CD4-positive, alpha-beta T cell (primary cell): ENCODE measurements at regions of chr16 and their contacts with region 1.

Region 1: GRCh38 chr16:75622761-75623605 is at the start of gene ADAT1:
- DNase-seq: peak; percentile 94 to 100 (median 97)
- ATAC-seq: peak; percentile 92
- H3K4me3 ChIP-seq: peak within 1 kb of the TSS; percentile 94
- H3K4me3 Mint-ChIP-seq: peak within 1 kb of the TSS; percentile 99
- H3K27ac ChIP-seq: peak within 1 kb of the TSS; percentile 87 to 98
- H3K27ac Mint-ChIP-seq: peak within 1 kb of the TSS; percentile 99
- H3K4me1 ChIP-seq: peaks cover 61% of the 10 kb centered on the region
- H3K4me1 Mint-ChIP-seq: peaks cover 77% of the 10 kb centered on the region
- H3K27me3 ChIP-seq: no peaks in the 10 kb centered on the region
- H3K27me3 Mint-ChIP-seq: no peaks in the 10 kb centered on the region
- CTCF ChIP-seq: no peak
- total RNA-seq, gene ADAT1: 46.7 to 47.6 TPM

Region 2: GRCh38 chr16:74984535-74985296 is 638.3 kb before region 1 on chr16 and contains the start of gene WDR59:
- CTCF ChIA-PET with region 1: no interaction called
- POLR2A ChIA-PET with region 1: no interaction called
- intact Hi-C with region 1: loop called (anchors 10 kb)
- DNase-seq: peak; percentile 94 to 100 (median 98)
- ATAC-seq: peak; percentile 98
- H3K4me3 ChIP-seq: peak within 1 kb of the TSS; percentile 100
- H3K4me3 Mint-ChIP-seq: peak within 1 kb of the TSS; percentile 96
- H3K27ac ChIP-seq: peak within 1 kb of the TSS; percentile 44 to 61
- H3K27ac Mint-ChIP-seq: peak within 1 kb of the TSS; percentile 84
- H3K4me1 ChIP-seq: peaks cover 23% of the 10 kb centered on the region
- H3K4me1 Mint-ChIP-seq: peaks cover 23% of the 10 kb centered on the region
- H3K27me3 ChIP-seq: no peaks in the 10 kb centered on the region
- H3K27me3 Mint-ChIP-seq: no peaks in the 10 kb centered on the region
- CTCF ChIP-seq: no peak
- total RNA-seq, gene WDR59: 60.2 to 67.2 TPM

Region 3: DNA sequence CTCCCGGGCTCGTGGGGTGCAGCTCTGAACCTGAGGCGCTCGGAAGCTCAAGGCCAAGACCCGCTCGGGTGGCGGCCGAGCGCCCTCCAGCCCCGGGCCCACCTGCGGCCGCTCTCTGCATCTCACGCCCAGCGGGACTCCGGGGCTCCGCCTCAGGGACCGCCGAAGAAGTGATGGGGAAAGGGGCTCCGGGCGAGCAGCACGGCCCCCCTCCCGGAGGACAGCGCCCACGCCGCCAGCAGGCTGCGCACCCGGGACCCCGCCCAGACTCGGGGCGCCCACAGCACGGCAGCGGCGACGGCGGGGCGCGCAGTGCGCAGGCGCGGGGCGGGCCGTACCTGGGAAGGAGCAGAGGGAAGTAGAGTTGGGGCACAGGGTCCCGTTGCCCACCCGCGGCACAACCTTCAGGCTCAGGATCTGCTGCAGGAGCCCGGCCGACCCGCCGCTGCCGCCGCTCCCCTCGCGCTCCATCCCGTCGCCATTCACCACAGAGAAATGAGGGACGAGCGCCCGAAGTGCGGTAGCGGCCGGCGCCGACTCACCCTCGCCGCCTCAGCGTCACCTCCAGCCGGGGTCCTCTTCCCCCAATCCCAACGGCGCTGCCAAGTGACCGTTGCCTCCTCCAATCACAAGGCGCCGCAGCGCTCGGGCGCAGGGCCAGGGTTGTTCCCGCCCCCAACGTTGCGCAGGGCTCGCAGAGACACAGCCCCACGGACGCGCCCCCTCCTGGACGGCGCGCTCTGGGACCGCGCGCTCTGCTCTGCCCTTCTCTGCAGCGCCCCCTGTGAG is 158.7 kb before region 1 on chr16 and contains the start of gene TMEM170A:
- CTCF ChIA-PET with region 1: interaction called, 4 read pairs
- POLR2A ChIA-PET with region 1: interaction called, 4 read pairs
- intact Hi-C with region 1: loop called (anchors 1 to 2 kb)
- DNase-seq: peak; percentile 97 to 100 (median 99)
- ATAC-seq: peak; percentile 86
- H3K4me3 ChIP-seq: peak within 1 kb of the TSS; percentile 87
- H3K4me3 Mint-ChIP-seq: peak within 1 kb of the TSS; percentile 96
- H3K27ac ChIP-seq: peak within 1 kb of the TSS; percentile 88 to 99
- H3K27ac Mint-ChIP-seq: peak within 1 kb of the TSS; percentile 95
- H3K4me1 ChIP-seq: peaks cover 40% of the 10 kb centered on the region
- H3K4me1 Mint-ChIP-seq: peaks cover 47% of the 10 kb centered on the region
- H3K27me3 ChIP-seq: no peaks in the 10 kb centered on the region
- H3K27me3 Mint-ChIP-seq: no peaks in the 10 kb centered on the region
- CTCF ChIP-seq: peak; percentile 100
- total RNA-seq, gene TMEM170A: 34.3 to 37.8 TPM

Region 4: DNA sequence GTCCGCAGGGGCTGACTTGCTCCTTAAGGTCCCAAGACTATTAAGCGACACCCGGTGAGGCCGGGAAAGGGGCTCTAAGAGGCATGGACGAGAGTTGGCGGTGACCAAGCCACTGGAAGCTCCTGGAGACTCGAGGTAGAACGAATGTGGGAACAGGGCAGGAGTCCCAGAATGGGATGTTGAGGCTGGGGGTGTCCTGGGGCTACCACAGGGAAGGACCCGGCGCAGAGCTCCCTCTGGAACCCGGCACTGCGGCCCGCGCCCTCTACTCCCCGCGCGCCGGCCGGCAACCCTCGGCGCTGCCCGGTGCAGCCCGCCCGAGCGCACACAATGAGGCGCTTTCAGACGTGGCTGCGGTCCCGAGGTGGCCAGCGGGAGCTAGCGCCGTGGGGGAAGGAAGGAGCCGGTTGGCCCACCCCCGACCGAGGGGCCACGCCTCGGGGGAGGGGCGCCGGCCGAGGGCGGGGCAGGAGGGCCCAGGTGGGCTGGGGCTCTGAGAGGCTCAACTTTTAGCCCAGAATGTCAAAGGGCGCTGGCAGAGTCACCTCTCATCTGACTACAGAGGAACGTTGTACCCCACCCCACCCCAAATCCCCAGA is 127.8 kb before region 1 on chr16 and contains the start of gene CHST6:
- CTCF ChIA-PET with region 1: no interaction called
- POLR2A ChIA-PET with region 1: no interaction called
- intact Hi-C with region 1: no loop called
- DNase-seq: peak in 4 of 14 experiments; percentile 6 to 36 (median 20)
- ATAC-seq: peak; percentile 39
- H3K4me3 ChIP-seq: peak within 1 kb of the TSS; percentile 12
- H3K4me3 Mint-ChIP-seq: peak within 1 kb of the TSS; percentile 68
- H3K27ac ChIP-seq: no peak within 1 kb of the TSS
- H3K27ac Mint-ChIP-seq: no peak within 1 kb of the TSS
- H3K4me1 ChIP-seq: peaks cover 8% of the 10 kb centered on the region
- H3K4me1 Mint-ChIP-seq: peaks cover 9% of the 10 kb centered on the region
- H3K27me3 ChIP-seq: peaks cover 22 to 29% of the 10 kb centered on the region in 2 experiments
- H3K27me3 Mint-ChIP-seq: peaks cover 45% of the 10 kb centered on the region
- CTCF ChIP-seq: no peak
- total RNA-seq, gene CHST6: not detected

Region 5: DNA sequence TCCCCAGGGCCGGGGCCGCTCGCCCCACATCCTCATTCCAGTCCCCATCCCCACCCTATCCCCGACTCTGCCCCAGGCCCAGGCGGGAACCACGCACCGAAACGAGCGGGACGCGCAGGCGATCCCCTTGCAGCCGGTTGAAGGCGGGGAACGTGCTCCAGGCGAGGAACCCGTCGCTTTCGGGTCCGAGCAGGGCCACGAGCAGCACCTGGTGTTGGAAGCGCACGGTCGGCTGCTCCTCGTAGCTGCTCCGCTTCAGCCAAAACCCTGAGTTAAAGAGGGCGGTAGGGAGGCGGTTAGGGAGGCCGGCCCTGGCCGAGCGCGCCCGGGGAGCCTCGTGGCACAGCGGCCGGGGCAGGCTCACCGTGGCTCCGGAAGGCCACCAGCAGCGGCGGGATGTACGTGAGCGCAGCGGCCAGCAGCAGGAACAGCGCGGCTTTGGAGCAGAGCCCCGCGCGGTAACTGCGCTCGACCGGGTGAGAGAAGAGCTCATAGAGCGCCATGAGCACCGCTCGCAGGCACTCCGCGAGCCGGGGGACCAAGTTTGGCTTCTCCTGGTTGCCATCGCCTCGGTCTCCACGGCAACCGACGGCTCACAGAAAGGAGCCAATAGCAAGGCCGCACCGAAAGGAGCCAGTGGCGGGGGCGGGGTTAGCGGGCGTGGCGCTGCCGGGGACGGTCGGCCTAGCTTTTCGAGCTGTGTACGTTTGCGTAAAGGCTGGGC is 67.1 kb before region 1 on chr16 and contains the start of gene TMEM231:
- CTCF ChIA-PET with region 1: interaction called, 3 read pairs
- POLR2A ChIA-PET with region 1: interaction called, 24 read pairs
- intact Hi-C with region 1: loop called in 1 of 2 experiments (anchors 2 kb)
- DNase-seq: peak; percentile 95 to 99 (median 97)
- ATAC-seq: peak; percentile 97
- H3K4me3 ChIP-seq: peak within 1 kb of the TSS; percentile 74
- H3K4me3 Mint-ChIP-seq: peak within 1 kb of the TSS; percentile 88
- H3K27ac ChIP-seq: peak within 1 kb of the TSS; percentile 58 to 82
- H3K27ac Mint-ChIP-seq: peak within 1 kb of the TSS; percentile 65
- H3K4me1 ChIP-seq: peaks cover 18% of the 10 kb centered on the region
- H3K4me1 Mint-ChIP-seq: peaks cover 13% of the 10 kb centered on the region
- H3K27me3 ChIP-seq: peaks cover 0 to 3% of the 10 kb centered on the region in 2 experiments
- H3K27me3 Mint-ChIP-seq: peaks cover 8% of the 10 kb centered on the region
- CTCF ChIP-seq: no peak
- total RNA-seq, gene TMEM231: 2.5 TPM

Region 6: GRCh38 chr16:75576384-75576811 is 46.6 kb before region 1 on chr16:
- CTCF ChIA-PET with region 1: no interaction called
- POLR2A ChIA-PET with region 1: interaction called, 10 read pairs
- intact Hi-C with region 1: no loop called
- DNase-seq: no peak
- ATAC-seq: no peak
- H3K4me3 ChIP-seq: no peak overlapping the region
- H3K4me3 Mint-ChIP-seq: no peak overlapping the region
- H3K27ac ChIP-seq: no peak overlapping the region
- H3K27ac Mint-ChIP-seq: no peak overlapping the region
- H3K4me1 ChIP-seq: peaks cover 4% of the 10 kb centered on the region
- H3K4me1 Mint-ChIP-seq: peaks cover 36% of the 10 kb centered on the region
- H3K27me3 ChIP-seq: no peaks in the 10 kb centered on the region
- H3K27me3 Mint-ChIP-seq: no peaks in the 10 kb centered on the region
- CTCF ChIP-seq: no peak

Region 7: GRCh38 chr16:75983741-75984381 is 360.9 kb after region 1 on chr16:
- CTCF ChIA-PET with region 1: no interaction called
- POLR2A ChIA-PET with region 1: no interaction called
- intact Hi-C with region 1: no loop called
- DNase-seq: no peak
- ATAC-seq: no peak
- H3K4me3 ChIP-seq: no peak overlapping the region
- H3K4me3 Mint-ChIP-seq: no peak overlapping the region
- H3K27ac ChIP-seq: no peak overlapping the region
- H3K27ac Mint-ChIP-seq: no peak overlapping the region
- H3K4me1 ChIP-seq: no peaks in the 10 kb centered on the region
- H3K4me1 Mint-ChIP-seq: no peaks in the 10 kb centered on the region
- H3K27me3 ChIP-seq: no peaks in the 10 kb centered on the region
- H3K27me3 Mint-ChIP-seq: no peaks in the 10 kb centered on the region
- CTCF ChIP-seq: no peak

Region 8: GRCh38 chr16:77190478-77191258 is 1567.7 kb after region 1 on chr16 and contains the start of gene MON1B:
- CTCF ChIA-PET with region 1: no interaction called
- POLR2A ChIA-PET with region 1: interaction called, 5 read pairs
- intact Hi-C with region 1: loop called (anchors 1 to 10 kb)
- DNase-seq: peak; percentile 88 to 99 (median 92)
- ATAC-seq: peak; percentile 92
- H3K4me3 ChIP-seq: peak within 1 kb of the TSS; percentile 98
- H3K4me3 Mint-ChIP-seq: peak within 1 kb of the TSS; percentile 92
- H3K27ac ChIP-seq: peak within 1 kb of the TSS; percentile 95 to 99
- H3K27ac Mint-ChIP-seq: peak within 1 kb of the TSS; percentile 97
- H3K4me1 ChIP-seq: peaks cover 44% of the 10 kb centered on the region
- H3K4me1 Mint-ChIP-seq: peaks cover 50% of the 10 kb centered on the region
- H3K27me3 ChIP-seq: no peaks in the 10 kb centered on the region
- H3K27me3 Mint-ChIP-seq: no peaks in the 10 kb centered on the region
- CTCF ChIP-seq: no peak
- total RNA-seq, gene MON1B: 52.3 to 52.6 TPM